ENCODE measurements at regions of chr5 and their contacts with region 1.

Region 1: GRCh38 chr5:57499262-57500050 is 16.8 kb upstream of the ACTBL2 start:
- DNase-seq: peak; percentile 77

Region 2: DNA sequence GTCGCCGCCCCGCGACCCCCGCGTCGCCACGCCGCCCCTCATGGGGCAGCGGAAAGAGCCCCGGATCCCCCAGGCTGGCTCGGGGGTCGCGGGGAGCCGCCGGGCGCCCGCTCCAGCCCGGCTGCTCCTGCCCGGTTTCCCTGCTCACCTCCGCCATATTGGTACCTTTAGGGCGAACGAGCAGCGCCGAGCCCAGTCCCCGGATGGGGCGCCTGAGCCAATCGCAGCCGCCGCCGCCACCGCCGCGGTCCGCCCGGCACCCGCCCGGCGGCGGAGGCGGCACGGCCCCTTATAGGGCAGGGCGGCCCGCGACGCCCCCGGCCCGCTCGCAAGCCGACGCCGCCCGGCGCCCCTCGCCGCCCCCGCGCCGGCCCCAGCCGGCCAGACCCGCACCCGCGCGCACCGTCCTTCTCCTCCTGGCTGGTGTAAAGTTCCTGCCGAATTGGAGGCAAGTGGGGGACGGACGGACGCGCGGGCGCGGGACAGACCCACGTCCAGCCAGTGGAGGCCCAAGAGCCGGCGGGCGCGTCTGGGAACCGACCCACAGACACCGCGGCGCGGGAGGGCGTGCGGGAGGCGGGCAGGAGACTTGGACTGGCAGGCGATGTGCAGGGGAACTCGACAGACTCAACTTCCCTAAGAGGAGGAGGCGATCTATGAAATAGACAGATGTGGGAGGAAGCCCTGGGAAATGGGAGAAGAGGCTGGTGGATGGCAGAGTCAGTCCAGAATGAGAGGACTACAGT is 547.3 kb before region 1 on chr5 and contains the start of gene MIER3:
- in situ Hi-C with region 1: no loop called
- DNase-seq: peak; percentile 55
- total RNA-seq, gene MIER3: 4.7 and 18.6 TPM in 2 replicates

Region 3: DNA sequence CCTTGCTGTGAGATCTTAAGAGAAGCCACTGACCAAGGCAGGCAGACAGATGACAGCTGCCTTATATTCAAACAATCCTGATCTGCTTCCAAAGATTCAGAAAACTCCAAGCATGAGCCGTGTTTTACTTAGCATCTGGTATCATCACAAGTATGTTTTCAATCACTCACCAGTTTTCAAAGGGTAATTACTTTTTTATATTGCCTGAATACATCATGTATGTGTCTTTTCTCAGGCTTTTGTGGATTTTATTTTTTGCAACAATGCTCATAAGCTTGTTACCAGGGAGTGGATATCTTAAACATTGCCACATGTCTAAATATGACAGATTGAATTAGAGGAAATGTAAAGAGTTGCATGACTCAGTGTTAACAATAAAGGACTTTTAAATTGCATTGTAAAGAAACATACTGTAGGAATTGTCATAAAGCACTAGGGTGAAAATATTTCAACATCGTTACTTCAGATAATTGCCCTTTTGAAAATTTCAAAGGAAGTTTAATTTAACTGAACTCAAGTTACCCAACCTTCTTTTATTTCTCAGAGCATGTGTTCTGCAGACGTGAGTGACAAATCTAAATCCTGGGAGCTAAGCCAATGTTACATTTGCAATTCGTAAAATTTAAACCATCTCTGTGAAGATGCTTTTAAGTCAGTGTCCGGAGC is 634.3 kb after region 1 on chr5:
- in situ Hi-C with region 1: loop called (anchors 25 kb)
- DNase-seq: no peak

Region 4: GRCh38 chr5:58460732-58461286 is 961.4 kb after region 1 on chr5:
- in situ Hi-C with region 1: loop called (anchors 10 kb)
- DNase-seq: peak; percentile 93

Measured in Caki2 (cell line).